Sigmoid colon (tissue), 7 donors: ENCODE measurements at regions of chr11 and their contacts with region 1.

Region 1: DNA sequence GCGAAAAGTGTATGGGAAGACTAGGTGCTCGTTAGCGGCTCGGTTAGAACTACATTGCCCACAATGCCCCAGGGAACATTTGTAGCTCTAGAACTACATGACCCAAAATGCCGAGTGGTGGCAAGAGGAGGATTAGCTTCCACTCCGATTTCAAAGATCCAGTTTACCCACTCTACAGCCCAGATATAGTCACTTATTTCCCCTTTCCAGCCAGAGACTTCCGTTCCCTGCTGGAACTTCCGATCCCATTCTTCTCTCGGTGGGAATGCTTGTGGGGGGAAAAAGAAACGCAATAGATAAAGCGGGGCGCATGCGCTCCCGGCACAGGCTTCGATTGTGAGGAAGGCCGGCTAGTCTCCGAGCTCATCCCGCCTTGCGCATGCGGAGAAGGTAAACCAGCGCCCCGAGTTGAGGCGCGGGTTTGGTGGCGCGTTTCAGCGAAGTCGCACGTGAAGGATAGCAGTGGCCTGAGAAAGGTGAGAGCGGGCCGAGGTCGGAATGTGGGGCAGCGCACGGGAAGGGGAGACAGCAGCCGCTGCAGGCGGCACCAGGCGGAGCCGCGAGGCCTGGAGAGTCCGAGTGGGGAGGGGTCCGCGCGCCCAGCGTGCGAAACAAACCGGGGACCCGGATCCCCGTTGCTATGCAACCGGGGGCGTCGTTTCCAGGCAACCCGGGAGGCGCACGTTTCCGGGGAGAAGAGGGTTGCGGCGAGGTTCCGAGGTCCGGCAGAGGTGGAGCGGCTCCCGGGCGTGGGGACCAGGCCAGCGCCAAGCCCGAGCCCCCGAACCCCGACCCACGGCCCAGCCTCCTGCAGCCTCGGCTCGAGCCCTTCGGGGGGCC is at the start of gene TMEM109:
- DNase-seq: peak; percentile 94
- H3K4me3 ChIP-seq: peak within 1 kb of the TSS; percentile 82 to 84 (median 83)
- H3K27ac ChIP-seq: peak within 1 kb of the TSS; percentile 91 to 98 (median 95)
- H3K4me1 ChIP-seq: peaks cover 0 to 38% (median 28%) of the 10 kb centered on the region in 4 donors
- H3K27me3 ChIP-seq: no peaks in the 10 kb centered on the region
- CTCF ChIP-seq: peak in 1 of 4 experiments; percentile 10
- EP300 ChIP-seq: no peak
- POLR2A ChIP-seq: peak in 1 of 2 donors; percentile 21
- total RNA-seq, gene TMEM109: 86.2 to 115 (median 98.4) TPM

Region 2: GRCh38 chr11:59550368-59550841 is 1363.6 kb before region 1 on chr11:
- intact Hi-C with region 1: loop called (anchors 10 kb)
- DNase-seq: peak; percentile 91
- H3K4me3 ChIP-seq: peak overlapping the region; percentile 46 to 55 (median 52)
- H3K27ac ChIP-seq: peak overlapping the region; percentile 80 to 87 (median 82)
- H3K4me1 ChIP-seq: peaks cover 0 to 13% (median 3%) of the 10 kb centered on the region in 4 donors
- H3K27me3 ChIP-seq: no peaks in the 10 kb centered on the region
- CTCF ChIP-seq: peak; percentile 46 to 76 (median 54)
- EP300 ChIP-seq: no peak
- POLR2A ChIP-seq: no peak

Region 3: DNA sequence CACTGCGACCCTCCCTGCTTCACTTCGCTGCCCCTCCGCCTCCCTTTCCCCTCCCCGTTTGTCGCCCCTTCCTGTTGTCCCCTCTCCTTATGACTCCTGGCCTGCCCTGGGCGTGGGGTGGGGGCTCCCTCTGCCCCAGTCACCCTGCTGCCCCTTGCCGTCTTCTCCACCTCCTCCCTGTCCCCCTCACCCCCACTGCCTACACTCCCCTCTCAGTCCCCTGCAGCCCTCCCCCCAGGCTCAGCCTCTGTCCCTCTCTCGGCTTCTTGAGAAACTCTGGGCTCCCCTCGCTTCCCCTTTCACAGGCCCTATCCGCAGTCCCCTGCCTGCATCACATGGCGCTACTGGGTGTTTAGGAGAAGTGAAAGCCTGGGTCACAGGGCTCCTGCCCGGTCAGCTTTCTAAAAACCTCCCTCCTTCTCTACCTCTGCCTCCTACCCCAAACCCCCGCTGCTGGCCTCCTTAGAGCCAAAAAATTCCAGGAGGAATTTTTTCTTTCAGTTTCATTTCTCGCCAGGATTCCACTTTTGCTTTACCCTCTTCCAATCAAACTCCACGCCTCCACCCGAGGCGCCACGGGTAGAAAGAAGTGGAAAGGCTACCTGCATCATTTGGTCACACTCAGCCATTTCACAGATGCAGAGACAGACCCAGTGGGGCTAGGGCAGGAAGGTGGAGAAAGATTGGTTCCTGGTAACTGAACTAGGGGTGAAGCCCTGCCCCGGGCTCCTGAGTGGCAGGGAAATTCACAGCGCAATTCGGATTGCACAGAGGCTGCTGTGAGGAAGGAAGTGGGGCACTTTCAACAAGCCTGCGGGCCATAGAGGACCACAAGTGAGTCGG is 38.1 kb after region 1 on chr11 and contains the start of gene SLC15A3:
- intact Hi-C with region 1: loop called (anchors 2 kb)
- DNase-seq: peak; percentile 87
- H3K4me3 ChIP-seq: peak within 1 kb of the TSS; percentile 39 to 59 (median 54)
- H3K27ac ChIP-seq: peak within 1 kb of the TSS; percentile 79 to 87 (median 82)
- H3K4me1 ChIP-seq: peaks cover 0 to 31% (median 25%) of the 10 kb centered on the region in 4 donors
- H3K27me3 ChIP-seq: no peaks in the 10 kb centered on the region
- CTCF ChIP-seq: no peak
- EP300 ChIP-seq: no peak
- POLR2A ChIP-seq: no peak
- total RNA-seq, gene SLC15A3: 12.8 to 43.9 (median 28.6) TPM

Region 4: DNA sequence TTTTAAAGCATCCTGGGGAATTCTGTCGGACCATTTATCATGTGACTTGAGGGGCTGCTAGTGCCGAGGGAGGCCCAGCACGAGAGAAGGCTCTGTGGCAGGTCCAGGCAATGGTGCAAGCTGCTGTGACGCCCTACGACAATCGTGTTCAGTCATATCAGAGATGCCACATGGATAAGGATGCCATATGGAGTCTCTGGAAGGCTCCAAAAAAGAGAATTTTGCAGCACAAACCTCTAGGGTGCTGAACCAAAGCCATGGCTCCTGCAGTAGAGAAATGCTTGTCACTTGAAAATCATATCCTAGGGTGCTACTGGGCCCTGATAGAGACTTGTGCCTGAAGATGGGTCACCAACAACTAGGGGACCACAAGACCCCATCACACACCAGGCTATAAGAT is 50.8 kb after region 1 on chr11:
- intact Hi-C with region 1: no loop called
- DNase-seq: no peak
- H3K4me3 ChIP-seq: no peak overlapping the region
- H3K27ac ChIP-seq: no peak overlapping the region
- H3K4me1 ChIP-seq: no peaks in the 10 kb centered on the region
- H3K27me3 ChIP-seq: no peaks in the 10 kb centered on the region
- CTCF ChIP-seq: no peak
- EP300 ChIP-seq: no peak
- POLR2A ChIP-seq: no peak

Region 5: GRCh38 chr11:61161190-61162091 is 247.4 kb after region 1 on chr11 and contains the start of gene VPS37C:
- intact Hi-C with region 1: loop called (anchors 2 kb)
- DNase-seq: peak; percentile 92
- H3K4me3 ChIP-seq: peak within 1 kb of the TSS; percentile 55 to 95 (median 74)
- H3K27ac ChIP-seq: peak within 1 kb of the TSS; percentile 91 to 99 (median 98)
- H3K4me1 ChIP-seq: peaks cover 0 to 43% (median 35%) of the 10 kb centered on the region in 4 donors
- H3K27me3 ChIP-seq: no peaks in the 10 kb centered on the region
- CTCF ChIP-seq: no peak
- EP300 ChIP-seq: no peak
- POLR2A ChIP-seq: peak in 1 of 2 donors; percentile 20
- total RNA-seq, gene VPS37C: 8.6 to 25.4 (median 18.5) TPM

Region 6: DNA sequence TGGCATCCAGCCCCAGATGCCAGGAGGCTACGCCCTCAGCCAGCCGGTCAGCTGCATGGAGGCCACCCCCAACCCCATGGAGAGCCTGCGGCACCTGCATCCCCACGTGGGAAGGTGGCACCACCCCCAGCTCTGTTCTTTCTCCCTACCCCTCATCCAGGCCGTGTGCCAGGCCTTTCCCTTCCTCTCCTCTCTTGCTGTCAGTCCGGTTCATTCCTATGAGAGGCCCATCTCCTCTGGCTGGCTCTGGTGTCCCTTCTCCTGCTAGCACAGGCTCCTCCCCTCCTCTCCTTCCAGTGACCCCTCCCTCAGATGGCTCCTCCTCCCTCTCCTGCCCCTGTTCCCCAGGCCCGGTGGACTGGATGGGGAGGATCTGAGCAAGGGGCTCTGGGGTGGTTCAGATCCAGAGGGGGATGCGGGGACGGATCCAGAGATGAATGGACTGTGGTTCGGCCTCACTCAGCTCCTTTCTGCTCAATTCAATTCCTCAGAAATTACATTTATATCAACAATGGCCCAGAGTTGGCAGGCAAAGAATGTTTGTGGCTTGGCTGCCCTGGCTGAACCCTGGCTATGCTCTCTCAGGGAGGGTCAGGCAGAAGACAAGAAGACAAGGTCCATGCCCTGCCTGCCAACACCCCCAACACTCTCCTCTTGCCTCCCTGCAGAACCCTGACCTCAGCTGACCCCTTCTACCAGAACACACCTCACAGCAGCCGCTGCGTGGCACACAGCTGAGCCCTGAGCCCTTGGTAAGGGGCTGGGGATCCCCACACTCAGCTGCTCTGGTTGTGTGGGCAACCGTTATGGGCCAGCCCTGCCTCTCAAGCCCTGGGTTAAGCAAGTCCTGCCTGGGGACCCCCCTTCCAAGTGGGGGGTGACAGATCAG is 576.1 kb after region 1 on chr11:
- intact Hi-C with region 1: no loop called
- DNase-seq: no peak
- H3K4me3 ChIP-seq: no peak overlapping the region
- H3K27ac ChIP-seq: peak overlapping the region; percentile 34 to 75 (median 59)
- H3K4me1 ChIP-seq: peaks cover 0 to 32% (median 27%) of the 10 kb centered on the region in 4 donors
- H3K27me3 ChIP-seq: no peaks in the 10 kb centered on the region
- CTCF ChIP-seq: no peak
- EP300 ChIP-seq: no peak
- POLR2A ChIP-seq: no peak

Region 7: GRCh38 chr11:61967116-61967923 is 1053.3 kb after region 1 on chr11 and contains the start of gene FTH1:
- intact Hi-C with region 1: loop called (anchors 10 kb)
- DNase-seq: peak; percentile 97
- H3K4me3 ChIP-seq: peak within 1 kb of the TSS; percentile 83 to 97 (median 90)
- H3K27ac ChIP-seq: peak within 1 kb of the TSS; percentile 99 to 100 (median 100)
- H3K4me1 ChIP-seq: peaks cover 0 to 77% (median 76%) of the 10 kb centered on the region in 4 donors
- H3K27me3 ChIP-seq: no peaks in the 10 kb centered on the region
- CTCF ChIP-seq: no peak
- EP300 ChIP-seq: peak in 1 of 4 donors; percentile 32
- POLR2A ChIP-seq: peak; percentile 96 to 97
- total RNA-seq, gene FTH1: 1,709 to 2,375 (median 1,954) TPM